Activated naive CD4-positive, alpha-beta T cell treated with anti-CD3 and anti-CD28 coated beads for 36 hours (primary cell): ENCODE measurements at regions of chr15 and their contacts with region 1.

Region 1: GRCh38 chr15:97903971-97904572 is 56.4 kb upstream of the ARRDC4 start:
- DNase-seq: peak; percentile 41
- H3K4me3 Mint-ChIP-seq: no peak overlapping the region
- H3K27ac Mint-ChIP-seq: no peak overlapping the region
- H3K4me1 Mint-ChIP-seq: no peaks in the 10 kb centered on the region
- H3K27me3 Mint-ChIP-seq: peaks cover 40% of the 10 kb centered on the region

Region 2: DNA sequence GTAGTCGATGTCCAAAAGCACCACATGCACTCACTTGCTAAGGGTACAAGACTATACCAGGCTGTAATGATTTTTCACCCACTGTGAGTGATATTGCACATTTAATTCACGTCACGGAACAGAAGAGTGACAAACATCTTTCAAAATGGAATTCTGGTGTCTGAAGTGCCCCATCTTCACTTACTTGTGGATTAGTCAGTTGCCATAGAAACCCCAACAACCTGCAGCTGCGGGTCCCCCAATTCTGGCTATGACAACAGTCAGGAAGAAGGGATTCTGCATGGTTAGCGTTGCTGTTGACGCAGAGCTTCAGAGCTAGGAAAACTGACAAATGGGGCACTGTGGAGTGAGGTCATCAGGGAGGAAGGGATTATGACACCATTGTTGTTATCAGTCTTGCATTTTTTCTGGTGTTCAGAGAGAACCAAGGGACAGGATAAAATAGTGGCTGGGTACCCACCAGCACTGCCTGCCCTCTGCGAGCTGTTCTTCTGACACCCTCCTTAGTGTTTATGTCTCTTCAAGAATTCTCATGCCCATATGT is 311.4 kb before region 1 on chr15:
- CTCF ChIA-PET with region 1: no interaction called
- intact Hi-C with region 1: no loop called
- DNase-seq: no peak
- H3K4me3 Mint-ChIP-seq: no peak overlapping the region
- H3K27ac Mint-ChIP-seq: no peak overlapping the region
- H3K4me1 Mint-ChIP-seq: no peaks in the 10 kb centered on the region
- H3K27me3 Mint-ChIP-seq: no peaks in the 10 kb centered on the region

Region 3: GRCh38 chr15:97840501-97840900 is 63.6 kb before region 1 on chr15:
- CTCF ChIA-PET with region 1: no interaction called
- intact Hi-C with region 1: no loop called
- DNase-seq: no peak
- H3K4me3 Mint-ChIP-seq: no peak overlapping the region
- H3K27ac Mint-ChIP-seq: no peak overlapping the region
- H3K4me1 Mint-ChIP-seq: no peaks in the 10 kb centered on the region
- H3K27me3 Mint-ChIP-seq: peaks cover 5% of the 10 kb centered on the region

Region 4: GRCh38 chr15:98154864-98155263 is 250.8 kb after region 1 on chr15:
- CTCF ChIA-PET with region 1: no interaction called
- intact Hi-C with region 1: no loop called
- DNase-seq: no peak
- H3K4me3 Mint-ChIP-seq: no peak overlapping the region
- H3K27ac Mint-ChIP-seq: no peak overlapping the region
- H3K4me1 Mint-ChIP-seq: peaks cover 6% of the 10 kb centered on the region
- H3K27me3 Mint-ChIP-seq: peaks cover 3% of the 10 kb centered on the region

Region 5: DNA sequence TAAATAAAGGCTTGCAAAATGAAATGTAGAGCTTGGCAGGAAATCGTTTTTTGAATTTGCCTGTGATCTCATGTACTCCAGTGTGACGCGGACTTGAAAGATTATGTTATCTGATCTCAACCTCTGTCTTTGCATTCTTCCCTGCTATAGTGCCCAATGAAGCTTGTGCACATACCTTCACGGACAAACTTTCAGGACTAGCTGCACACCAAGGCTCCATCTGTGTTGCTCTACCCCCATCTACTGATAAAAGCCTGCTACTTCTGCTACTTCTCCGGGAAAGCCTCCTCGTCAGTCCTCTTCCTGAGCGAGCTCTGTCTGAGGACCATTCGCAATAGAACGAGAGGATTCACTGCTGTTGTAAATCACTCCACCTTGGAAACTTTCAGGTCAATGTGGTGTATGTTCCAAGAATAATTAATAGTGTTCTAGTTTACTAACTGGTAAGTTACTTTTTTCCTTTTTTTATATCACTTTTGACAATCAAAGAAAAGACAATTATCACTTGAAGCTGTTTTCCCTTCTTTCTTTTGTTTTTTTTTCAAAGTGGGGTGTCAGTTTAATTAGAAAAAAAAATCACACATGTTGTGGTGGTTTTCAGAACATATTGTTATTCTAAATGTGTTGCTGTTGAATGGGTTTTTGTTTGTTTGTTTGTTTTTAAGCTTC is 274.0 kb after region 1 on chr15:
- CTCF ChIA-PET with region 1: interaction called, 21 read pairs
- intact Hi-C with region 1: loop called (anchors 1 kb)
- DNase-seq: peak; percentile 49
- H3K4me3 Mint-ChIP-seq: no peak overlapping the region
- H3K27ac Mint-ChIP-seq: no peak overlapping the region
- H3K4me1 Mint-ChIP-seq: peaks cover 8% of the 10 kb centered on the region
- H3K27me3 Mint-ChIP-seq: peaks cover 24% of the 10 kb centered on the region

Region 6: DNA sequence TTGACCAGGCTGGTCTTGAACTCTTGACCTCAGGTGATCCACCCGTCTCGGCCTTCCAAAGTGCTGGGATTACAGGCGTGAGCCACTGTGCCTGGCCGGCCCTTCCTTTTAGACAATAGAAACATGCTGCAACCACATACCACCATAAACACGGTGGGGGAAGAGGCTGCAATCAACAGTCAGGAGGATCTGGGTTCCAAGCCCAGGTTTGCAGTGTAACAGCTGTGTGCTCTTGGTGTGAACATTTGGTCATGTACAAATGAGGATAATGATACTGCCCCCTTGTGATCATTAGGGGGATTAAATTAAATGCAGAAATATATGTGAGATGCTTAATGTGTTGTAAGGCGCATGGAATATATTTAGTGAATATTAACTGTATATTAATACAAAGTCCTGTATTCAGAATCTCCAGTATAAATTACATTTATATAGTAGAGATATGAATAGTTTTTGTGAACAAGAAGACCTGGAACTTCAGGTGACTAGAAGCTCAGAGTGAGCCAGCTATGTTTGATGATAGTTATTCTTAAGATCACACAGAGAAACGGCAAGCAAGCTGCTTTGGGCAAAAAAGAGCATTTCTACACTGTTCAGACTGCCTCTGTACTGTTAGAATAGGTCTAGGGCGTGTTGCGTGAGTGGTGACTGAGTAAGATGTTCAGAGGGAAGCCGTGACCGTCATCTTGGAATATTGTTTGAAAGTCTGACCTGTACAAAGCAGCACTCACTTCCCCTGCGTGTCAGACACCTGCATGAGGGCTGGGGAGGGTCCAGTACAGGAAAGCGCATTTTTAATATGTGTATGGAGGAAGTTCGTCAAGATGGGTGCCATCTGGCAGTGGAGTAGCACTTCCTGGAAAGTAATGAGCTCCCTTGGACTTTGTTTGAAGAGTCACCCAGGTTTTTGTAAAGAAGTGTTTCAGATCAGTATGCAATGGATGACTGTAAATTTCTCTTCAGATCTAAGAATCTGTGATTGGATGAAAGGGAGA is 977.8 kb after region 1 on chr15:
- CTCF ChIA-PET with region 1: no interaction called
- intact Hi-C with region 1: no loop called
- DNase-seq: peak; percentile 23
- H3K4me3 Mint-ChIP-seq: no peak overlapping the region
- H3K27ac Mint-ChIP-seq: peak overlapping the region; percentile 25
- H3K4me1 Mint-ChIP-seq: peaks cover 14% of the 10 kb centered on the region
- H3K27me3 Mint-ChIP-seq: no peaks in the 10 kb centered on the region